Activated B cell treated with CpG ODN at 0.5 μM for 24 hours (primary cell): ENCODE measurements at regions of chr13 and their contacts with region 1.

Region 1: GRCh38 chr13:19863323-19864023 is at the start of gene ZMYM5:
- DNase-seq: peak; percentile 93
- ATAC-seq: peak; percentile 88
- H3K4me3 Mint-ChIP-seq: peak within 1 kb of the TSS; percentile 89
- H3K27ac Mint-ChIP-seq: peak within 1 kb of the TSS; percentile 96
- H3K4me1 Mint-ChIP-seq: peaks cover 30% of the 10 kb centered on the region
- H3K27me3 Mint-ChIP-seq: no peaks in the 10 kb centered on the region
- CTCF ChIP-seq: no peak
- total RNA-seq, gene ZMYM5: 14.1 and 17.1 TPM in 2 replicates

Region 2: GRCh38 chr13:19567820-19568534 is 295.5 kb before region 1 on chr13:
- CTCF ChIA-PET with region 1: no interaction called
- POLR2A ChIA-PET with region 1: no interaction called
- intact Hi-C with region 1: loop called (anchors 10 kb)
- DNase-seq: no peak
- ATAC-seq: no peak
- H3K4me3 Mint-ChIP-seq: peak overlapping the region; percentile 4
- H3K27ac Mint-ChIP-seq: no peak overlapping the region
- H3K4me1 Mint-ChIP-seq: peaks cover 16% of the 10 kb centered on the region
- H3K27me3 Mint-ChIP-seq: peaks cover 2% of the 10 kb centered on the region
- CTCF ChIP-seq: no peak

Region 3: DNA sequence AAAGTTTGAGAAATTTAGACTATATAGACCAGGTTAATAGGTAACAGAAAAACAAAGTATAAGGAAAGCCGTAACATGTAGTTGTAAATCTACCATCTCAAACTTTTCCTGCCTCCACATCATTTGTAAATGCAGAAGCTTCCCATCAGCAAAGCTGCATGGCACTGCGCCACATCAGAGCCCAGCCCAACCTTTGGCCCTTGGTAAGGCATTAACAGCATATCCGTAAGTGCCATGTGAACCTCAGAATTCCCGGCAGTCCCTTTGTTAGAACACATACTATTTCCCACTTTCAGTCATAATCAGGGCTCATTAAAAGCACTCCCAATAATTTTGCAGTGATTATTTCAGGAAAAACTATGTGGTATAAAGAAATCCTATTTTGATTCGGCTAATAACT is 178.4 kb before region 1 on chr13:
- CTCF ChIA-PET with region 1: no interaction called
- POLR2A ChIA-PET with region 1: no interaction called
- intact Hi-C with region 1: no loop called
- DNase-seq: no peak
- ATAC-seq: no peak
- H3K4me3 Mint-ChIP-seq: no peak overlapping the region
- H3K27ac Mint-ChIP-seq: no peak overlapping the region
- H3K4me1 Mint-ChIP-seq: no peaks in the 10 kb centered on the region
- H3K27me3 Mint-ChIP-seq: no peaks in the 10 kb centered on the region
- CTCF ChIP-seq: no peak

Region 4: DNA sequence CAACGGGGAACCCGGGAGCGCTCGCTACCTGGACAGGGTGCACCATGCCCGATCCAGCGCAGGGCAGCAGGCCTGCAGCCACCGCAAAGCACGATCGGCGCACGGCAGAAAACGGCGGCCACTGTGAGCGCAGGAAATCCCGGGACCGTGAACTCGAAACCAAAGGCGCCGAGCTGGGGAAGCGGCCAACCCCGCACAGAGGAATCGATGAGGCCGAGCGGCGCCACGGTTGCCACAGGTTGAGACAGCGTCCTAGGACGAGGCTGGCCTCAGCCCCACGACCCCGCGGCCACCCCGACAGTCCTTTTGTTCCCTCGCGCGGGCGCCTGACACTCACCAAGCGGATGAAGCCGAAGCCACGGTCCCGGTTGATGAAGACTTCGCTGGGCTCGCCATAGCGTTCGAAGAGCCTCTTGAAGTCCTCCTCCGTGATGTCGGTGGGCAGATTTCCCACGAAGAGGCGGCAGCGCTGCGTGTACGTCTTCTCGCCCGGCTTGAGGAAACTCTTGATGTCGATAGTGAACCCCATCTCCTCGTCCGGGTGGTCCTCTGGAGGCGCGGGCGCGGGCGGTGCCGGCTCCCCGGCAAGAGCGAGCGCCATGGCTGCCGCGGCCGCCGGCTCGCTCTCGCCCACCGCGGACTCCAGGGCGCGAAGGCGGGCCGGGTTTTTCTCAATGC is 81.3 kb before region 1 on chr13:
- CTCF ChIA-PET with region 1: interaction called, 7 read pairs
- POLR2A ChIA-PET with region 1: interaction called, 39 read pairs
- intact Hi-C with region 1: loop called (anchors 1 kb)
- DNase-seq: peak; percentile 57
- ATAC-seq: peak; percentile 61
- H3K4me3 Mint-ChIP-seq: peak overlapping the region; percentile 97
- H3K27ac Mint-ChIP-seq: peak overlapping the region; percentile 98
- H3K4me1 Mint-ChIP-seq: peaks cover 15% of the 10 kb centered on the region
- H3K27me3 Mint-ChIP-seq: no peaks in the 10 kb centered on the region
- CTCF ChIP-seq: no peak

Region 5: DNA sequence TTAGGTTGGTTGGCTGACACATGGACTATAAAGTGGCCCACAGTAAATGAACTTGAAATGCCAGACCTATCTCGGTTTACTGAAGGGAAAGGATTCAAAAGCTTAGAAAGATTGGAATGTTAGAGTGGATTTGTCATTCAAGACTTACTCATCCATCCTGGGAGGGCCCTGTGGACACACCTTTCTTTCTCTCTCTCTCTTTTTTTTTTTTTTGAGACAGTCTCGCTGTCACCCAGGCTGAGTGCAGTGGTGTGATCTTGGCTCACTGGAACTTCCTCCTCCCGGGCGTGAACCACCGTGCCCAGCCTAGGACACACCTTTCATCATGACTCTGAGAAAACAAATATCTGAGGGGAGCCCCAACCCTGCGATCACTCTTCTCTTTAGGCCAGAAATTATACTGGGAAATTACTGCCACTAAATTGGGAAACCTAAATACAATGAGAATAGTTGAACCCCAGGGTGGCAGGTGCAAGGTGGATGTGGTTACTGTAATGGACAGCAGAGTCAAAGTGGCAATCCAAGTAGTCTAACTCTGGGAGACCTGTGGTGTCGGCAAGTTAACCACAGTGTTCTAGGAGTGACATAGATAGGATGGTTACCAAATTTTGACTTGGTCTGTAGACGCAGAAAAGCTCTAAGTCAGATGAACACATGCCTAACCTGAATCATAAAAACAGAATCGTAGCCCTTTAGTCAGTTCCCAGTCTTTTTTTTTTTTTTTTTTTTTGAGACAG is 47.0 kb after region 1 on chr13:
- CTCF ChIA-PET with region 1: no interaction called
- POLR2A ChIA-PET with region 1: no interaction called
- intact Hi-C with region 1: no loop called
- DNase-seq: no peak
- ATAC-seq: no peak
- H3K4me3 Mint-ChIP-seq: no peak overlapping the region
- H3K27ac Mint-ChIP-seq: no peak overlapping the region
- H3K4me1 Mint-ChIP-seq: no peaks in the 10 kb centered on the region
- H3K27me3 Mint-ChIP-seq: no peaks in the 10 kb centered on the region
- CTCF ChIP-seq: no peak

Region 6: GRCh38 chr13:19959831-19960652 is 96.6 kb after region 1 on chr13:
- CTCF ChIA-PET with region 1: interaction called, 5 read pairs
- POLR2A ChIA-PET with region 1: interaction called, 53 read pairs
- intact Hi-C with region 1: loop called (anchors 1 kb)
- DNase-seq: peak; percentile 60
- ATAC-seq: peak; percentile 43
- H3K4me3 Mint-ChIP-seq: peak overlapping the region; percentile 98
- H3K27ac Mint-ChIP-seq: peak overlapping the region; percentile 98
- H3K4me1 Mint-ChIP-seq: peaks cover 33% of the 10 kb centered on the region
- H3K27me3 Mint-ChIP-seq: no peaks in the 10 kb centered on the region
- CTCF ChIP-seq: no peak

Region 7: DNA sequence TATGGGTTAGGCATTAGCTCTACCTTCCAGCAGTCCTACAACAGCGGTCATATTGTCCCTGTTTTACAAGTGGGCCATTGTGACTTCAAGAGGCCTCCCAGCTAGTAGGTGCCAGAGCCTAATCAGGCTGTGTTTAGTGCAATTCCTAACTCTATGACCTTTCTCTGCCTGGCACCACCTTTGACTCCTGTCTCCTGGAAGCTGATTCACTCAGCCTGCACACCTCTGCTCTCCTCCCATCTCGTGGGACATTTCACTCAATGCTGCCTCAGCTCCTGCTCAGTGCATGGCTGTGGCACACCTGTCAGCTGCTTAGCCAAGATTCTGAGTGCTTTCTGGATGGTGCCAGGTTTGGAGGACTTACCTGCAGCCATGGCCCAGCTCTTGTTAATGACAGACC is 378.1 kb after region 1 on chr13:
- CTCF ChIA-PET with region 1: no interaction called
- POLR2A ChIA-PET with region 1: no interaction called
- intact Hi-C with region 1: no loop called
- DNase-seq: no peak
- ATAC-seq: no peak
- H3K4me3 Mint-ChIP-seq: no peak overlapping the region
- H3K27ac Mint-ChIP-seq: no peak overlapping the region
- H3K4me1 Mint-ChIP-seq: no peaks in the 10 kb centered on the region
- H3K27me3 Mint-ChIP-seq: peaks cover 19% of the 10 kb centered on the region
- CTCF ChIP-seq: no peak

Region 8: GRCh38 chr13:20546556-20546955 is 683.1 kb after region 1 on chr13:
- CTCF ChIA-PET with region 1: no interaction called
- POLR2A ChIA-PET with region 1: no interaction called
- intact Hi-C with region 1: loop called (anchors 10 kb)
- DNase-seq: no peak
- ATAC-seq: peak; percentile 63
- H3K4me3 Mint-ChIP-seq: peak overlapping the region; percentile 29
- H3K27ac Mint-ChIP-seq: peak overlapping the region; percentile 48
- H3K4me1 Mint-ChIP-seq: peaks cover 47% of the 10 kb centered on the region
- H3K27me3 Mint-ChIP-seq: no peaks in the 10 kb centered on the region
- CTCF ChIP-seq: no peak

Region 9: GRCh38 chr13:20773194-20774080 is 910.0 kb after region 1 on chr13 and contains the start of gene EEF1AKMT1:
- CTCF ChIA-PET with region 1: no interaction called
- POLR2A ChIA-PET with region 1: interaction called, 3 read pairs
- intact Hi-C with region 1: loop called (anchors 5 kb)
- DNase-seq: peak; percentile 94
- ATAC-seq: peak; percentile 95
- H3K4me3 Mint-ChIP-seq: peak within 1 kb of the TSS; percentile 98
- H3K27ac Mint-ChIP-seq: peak within 1 kb of the TSS; percentile 99
- H3K4me1 Mint-ChIP-seq: peaks cover 21% of the 10 kb centered on the region
- H3K27me3 Mint-ChIP-seq: no peaks in the 10 kb centered on the region
- CTCF ChIP-seq: no peak
- total RNA-seq, gene EEF1AKMT1: 3.9 and 7.4 TPM in 2 replicates

Region 10: DNA sequence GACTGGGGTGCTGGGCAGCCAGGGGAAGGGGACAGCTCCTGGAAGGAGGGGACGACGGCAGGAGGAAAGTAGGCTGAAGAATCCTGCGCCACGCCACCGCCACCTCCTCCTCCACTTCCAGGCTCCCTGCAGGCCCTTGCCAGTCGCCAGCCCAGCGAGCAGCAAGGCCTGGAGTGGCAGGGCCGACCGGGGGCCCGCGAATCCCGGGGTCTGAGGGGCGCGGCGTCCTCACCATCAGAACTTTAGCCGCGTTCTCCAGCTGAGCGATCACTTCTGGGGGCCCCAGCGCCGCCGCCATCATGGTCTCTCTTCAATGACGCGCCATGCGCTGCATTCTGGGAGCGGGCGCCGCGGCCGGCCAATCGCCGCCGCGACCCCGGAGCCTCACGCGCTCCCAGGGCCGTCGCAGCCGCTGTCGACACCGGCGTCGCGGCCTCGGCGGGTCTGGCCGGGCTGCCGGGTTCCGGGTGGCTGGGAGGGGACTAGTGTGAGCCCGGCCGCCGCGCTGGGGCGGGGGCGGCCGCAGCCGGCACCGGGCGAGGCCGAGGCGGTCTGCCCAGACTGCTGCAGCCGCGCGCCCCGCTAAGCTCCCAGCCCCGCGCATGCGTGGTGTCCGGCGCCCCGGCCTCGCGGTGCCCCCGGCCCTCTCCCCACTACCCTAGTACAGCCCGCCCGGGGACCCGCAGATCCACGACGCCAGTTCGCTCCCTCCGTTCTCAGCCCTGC is 1039.1 kb after region 1 on chr13 and contains the start of gene XPO4:
- CTCF ChIA-PET with region 1: no interaction called
- POLR2A ChIA-PET with region 1: no interaction called
- intact Hi-C with region 1: loop called (anchors 5 kb)
- DNase-seq: peak; percentile 80
- ATAC-seq: peak; percentile 93
- H3K4me3 Mint-ChIP-seq: peak within 1 kb of the TSS; percentile 91
- H3K27ac Mint-ChIP-seq: peak within 1 kb of the TSS; percentile 86
- H3K4me1 Mint-ChIP-seq: peaks cover 32% of the 10 kb centered on the region
- H3K27me3 Mint-ChIP-seq: peaks cover 2% of the 10 kb centered on the region
- CTCF ChIP-seq: no peak
- total RNA-seq, gene XPO4: 25.2 and 27.4 TPM in 2 replicates